Activated CD4-positive, alpha-beta memory T cell treated with anti-CD3 and anti-CD28 coated beads for 36 hours (primary cell): ENCODE measurements at regions of chr13 and their contacts with region 1.

Region 1: GRCh38 chr13:29771247-29771646 is 79.2 kb downstream of the UBL3 start:
- DNase-seq: no peak
- H3K4me3 Mint-ChIP-seq: no peak overlapping the region
- H3K27ac Mint-ChIP-seq: no peak overlapping the region
- H3K4me1 Mint-ChIP-seq: peaks cover 4% of the 10 kb centered on the region
- H3K27me3 Mint-ChIP-seq: no peaks in the 10 kb centered on the region

Region 2: DNA sequence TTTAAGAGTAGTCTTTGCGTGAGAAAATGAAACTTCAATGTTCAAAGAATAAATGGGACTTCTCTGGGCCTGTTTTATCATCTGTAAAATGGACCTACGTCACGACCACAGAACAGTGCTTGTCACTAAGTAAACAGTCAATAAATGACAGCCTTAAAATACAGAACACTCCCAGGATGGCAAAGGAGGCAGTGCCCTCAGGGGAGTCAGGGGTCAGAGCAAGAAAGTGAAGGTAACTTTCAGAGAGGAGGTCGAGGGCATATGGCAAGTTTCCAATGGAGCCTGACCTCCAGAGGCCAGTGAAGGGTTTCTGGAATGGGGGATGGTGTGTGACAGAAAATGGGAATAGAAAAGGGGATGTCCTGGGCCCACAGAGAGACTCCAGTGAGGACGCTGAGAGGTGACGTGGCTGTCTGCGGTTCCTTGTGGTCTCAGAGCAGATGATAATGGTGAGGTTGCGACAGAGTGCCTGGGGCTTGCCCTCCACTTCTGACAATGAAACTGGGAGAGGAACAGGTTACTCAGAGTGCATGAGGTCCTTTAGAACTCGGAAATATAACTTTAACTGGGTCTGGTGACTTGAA is 12.6 kb before region 1 on chr13:
- CTCF ChIA-PET with region 1: interaction called, 12 read pairs
- POLR2A ChIA-PET with region 1: no interaction called
- intact Hi-C with region 1: no loop called
- DNase-seq: peak; percentile 86
- H3K4me3 Mint-ChIP-seq: peak overlapping the region; percentile 7
- H3K27ac Mint-ChIP-seq: no peak overlapping the region
- H3K4me1 Mint-ChIP-seq: peaks cover 18% of the 10 kb centered on the region
- H3K27me3 Mint-ChIP-seq: no peaks in the 10 kb centered on the region

Region 3: DNA sequence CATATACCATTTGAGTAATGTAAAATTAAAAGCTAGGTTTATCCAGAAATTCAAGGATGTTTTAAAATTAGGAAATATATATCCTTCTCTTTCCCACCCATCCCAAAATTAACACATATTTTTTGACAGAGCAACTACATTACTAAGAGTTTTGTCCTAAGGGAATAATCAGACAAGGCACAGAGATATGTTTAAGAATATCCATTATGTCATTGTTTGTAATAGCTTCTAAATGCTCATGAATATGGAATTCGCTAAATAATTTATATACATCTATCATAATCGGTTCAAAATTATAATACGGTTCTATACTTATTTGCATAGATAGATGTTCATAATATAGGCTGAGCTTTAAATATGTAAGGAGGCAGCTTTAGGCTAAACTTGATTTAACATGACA is 69.3 kb after region 1 on chr13:
- CTCF ChIA-PET with region 1: interaction called, 19 read pairs
- POLR2A ChIA-PET with region 1: no interaction called
- intact Hi-C with region 1: no loop called
- DNase-seq: no peak
- H3K4me3 Mint-ChIP-seq: no peak overlapping the region
- H3K27ac Mint-ChIP-seq: no peak overlapping the region
- H3K4me1 Mint-ChIP-seq: peaks cover 67% of the 10 kb centered on the region
- H3K27me3 Mint-ChIP-seq: no peaks in the 10 kb centered on the region

Region 4: GRCh38 chr13:29902101-29902952 is 131.1 kb after region 1 on chr13:
- CTCF ChIA-PET with region 1: interaction called, 10 read pairs
- POLR2A ChIA-PET with region 1: no interaction called
- intact Hi-C with region 1: no loop called
- DNase-seq: peak; percentile 49
- H3K4me3 Mint-ChIP-seq: peak overlapping the region; percentile 68
- H3K27ac Mint-ChIP-seq: no peak overlapping the region
- H3K4me1 Mint-ChIP-seq: peaks cover 25% of the 10 kb centered on the region
- H3K27me3 Mint-ChIP-seq: no peaks in the 10 kb centered on the region

Region 5: DNA sequence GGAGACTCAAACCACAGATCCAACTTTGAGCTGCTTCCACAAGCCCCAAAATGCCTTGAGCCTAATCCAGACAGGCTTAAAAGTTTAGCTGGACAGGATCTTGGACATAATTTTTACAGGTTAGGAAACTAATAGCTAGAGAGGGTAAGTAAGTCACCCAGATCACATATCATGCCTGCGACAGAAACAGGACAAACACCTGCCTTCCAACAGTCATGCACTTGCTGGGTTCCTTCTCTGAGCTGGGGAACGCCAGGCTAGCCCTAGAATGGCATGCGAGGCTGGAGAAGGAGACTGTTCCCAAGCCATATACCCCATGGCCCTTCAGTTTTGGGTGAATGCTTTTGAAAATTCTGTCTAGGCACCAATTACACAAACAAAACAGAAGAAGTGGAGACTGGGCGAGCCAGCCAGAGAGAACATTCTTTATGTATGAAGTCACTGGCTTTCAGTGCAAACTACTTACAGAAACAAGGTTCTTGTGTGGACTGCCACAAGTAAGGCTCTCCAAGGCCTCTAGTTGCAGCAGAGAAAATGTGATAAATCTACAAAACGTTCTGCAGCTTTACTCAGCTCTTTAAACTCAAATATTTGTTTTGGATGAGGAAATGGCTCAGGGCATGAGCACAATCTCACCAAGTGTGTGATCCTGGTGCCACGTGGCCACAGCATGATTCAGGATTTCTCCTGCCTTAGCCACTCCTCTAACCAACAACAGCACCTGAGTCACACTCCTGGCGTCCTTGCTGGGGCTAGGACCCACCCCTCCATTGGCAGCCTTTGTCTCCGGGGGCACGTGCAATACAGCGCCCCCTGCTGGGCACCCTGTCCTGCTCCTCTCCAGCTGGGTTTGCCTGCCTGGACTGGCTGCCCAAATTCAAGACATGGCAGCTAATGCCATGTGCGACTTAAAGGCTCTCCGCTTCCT is 152.6 kb after region 1 on chr13:
- CTCF ChIA-PET with region 1: interaction called, 64 read pairs
- POLR2A ChIA-PET with region 1: no interaction called
- intact Hi-C with region 1: no loop called
- DNase-seq: peak; percentile 87
- H3K4me3 Mint-ChIP-seq: no peak overlapping the region
- H3K27ac Mint-ChIP-seq: no peak overlapping the region
- H3K4me1 Mint-ChIP-seq: peaks cover 25% of the 10 kb centered on the region
- H3K27me3 Mint-ChIP-seq: no peaks in the 10 kb centered on the region